Activated naive CD4-positive, alpha-beta T cell treated with anti-CD3 and anti-CD28 coated beads for 36 hours (primary cell): ENCODE measurements at regions of chr2 and their contacts with region 1.

Region 1: GRCh38 chr2:174688079-174688478 is 76.2 kb downstream of the CHRNA1 start:
- DNase-seq: no peak
- H3K4me3 Mint-ChIP-seq: no peak overlapping the region
- H3K27ac Mint-ChIP-seq: no peak overlapping the region
- H3K4me1 Mint-ChIP-seq: peaks cover 22% of the 10 kb centered on the region
- H3K27me3 Mint-ChIP-seq: no peaks in the 10 kb centered on the region

Region 2: DNA sequence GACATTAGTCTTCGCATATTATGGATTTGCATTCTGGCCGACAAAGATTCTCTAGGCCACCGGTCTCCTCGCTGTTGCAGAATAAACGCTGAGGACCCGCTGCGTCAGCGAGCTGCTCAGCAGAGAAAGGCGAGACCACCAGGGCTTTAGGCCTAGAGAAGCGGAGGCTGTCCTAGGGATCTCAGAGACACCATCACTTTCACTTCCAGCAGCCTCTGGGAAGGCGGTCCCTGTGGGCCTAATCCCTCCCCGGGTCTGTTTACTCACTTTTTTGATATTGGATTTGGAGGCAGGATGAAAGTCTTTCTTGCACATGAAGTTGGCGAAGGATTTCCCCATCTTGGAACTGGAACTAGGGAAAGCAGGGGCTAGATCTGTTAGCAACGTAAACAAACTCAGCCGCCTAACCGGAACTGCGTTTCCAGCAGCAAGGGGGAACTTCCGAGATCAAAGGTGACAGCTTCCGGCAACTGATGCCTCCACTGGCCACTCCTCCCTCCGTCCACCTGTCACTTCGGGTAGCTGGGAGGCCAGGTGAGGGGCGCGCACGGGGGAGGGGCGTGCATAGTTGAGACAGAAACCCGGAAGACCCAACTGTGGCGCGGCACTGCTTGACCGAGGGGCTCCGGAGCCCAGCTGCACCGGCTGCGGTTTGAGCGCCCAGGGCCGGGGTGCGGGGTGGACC is 292.7 kb before region 1 on chr2 and contains the start of gene SCRN3:
- CTCF ChIA-PET with region 1: no interaction called
- intact Hi-C with region 1: loop called (anchors 5 kb)
- DNase-seq: peak; percentile 88
- H3K4me3 Mint-ChIP-seq: peak within 1 kb of the TSS; percentile 99
- H3K27ac Mint-ChIP-seq: peak within 1 kb of the TSS; percentile 99
- H3K4me1 Mint-ChIP-seq: peaks cover 38% of the 10 kb centered on the region
- H3K27me3 Mint-ChIP-seq: no peaks in the 10 kb centered on the region
- total RNA-seq, gene SCRN3: 10.7 to 12.3 TPM

Region 3: GRCh38 chr2:174522553-174522952 is 165.5 kb before region 1 on chr2:
- CTCF ChIA-PET with region 1: no interaction called
- intact Hi-C with region 1: loop called (anchors 2 kb)
- DNase-seq: no peak
- H3K4me3 Mint-ChIP-seq: no peak overlapping the region
- H3K27ac Mint-ChIP-seq: no peak overlapping the region
- H3K4me1 Mint-ChIP-seq: peaks cover 14% of the 10 kb centered on the region
- H3K27me3 Mint-ChIP-seq: no peaks in the 10 kb centered on the region

Region 4: DNA sequence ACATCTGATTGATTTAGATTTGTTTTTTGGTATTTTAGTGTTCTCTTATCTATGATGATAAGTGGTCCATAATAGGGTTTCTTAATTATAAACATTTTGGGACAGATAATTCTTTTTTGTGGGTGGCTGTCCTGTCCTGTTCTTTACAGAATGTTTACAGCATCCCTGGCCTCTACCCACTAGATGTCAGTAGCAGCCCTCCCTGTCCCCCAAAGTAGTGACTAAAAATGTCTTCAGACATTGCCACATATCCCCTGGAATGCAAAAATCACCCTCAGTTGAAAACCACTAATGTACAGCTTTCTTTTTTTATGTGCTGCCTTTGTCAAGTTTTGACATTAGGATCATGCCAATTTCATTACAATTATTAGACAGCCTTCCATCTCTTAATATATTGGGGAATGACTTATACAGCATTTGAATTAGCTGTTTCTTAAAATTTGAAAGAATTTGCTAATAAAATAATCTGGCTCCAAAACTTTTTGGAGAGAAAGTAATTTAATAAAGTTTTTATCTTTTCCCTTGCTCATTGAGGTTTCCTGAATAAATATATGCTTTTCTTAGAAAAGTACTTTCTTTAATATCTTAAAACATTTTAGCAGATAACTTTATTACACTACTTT is 110.0 kb before region 1 on chr2:
- CTCF ChIA-PET with region 1: interaction called, 114 read pairs
- intact Hi-C with region 1: loop called (anchors 1 kb)
- DNase-seq: peak; percentile 77
- H3K4me3 Mint-ChIP-seq: no peak overlapping the region
- H3K27ac Mint-ChIP-seq: peak overlapping the region; percentile 30
- H3K4me1 Mint-ChIP-seq: peaks cover 69% of the 10 kb centered on the region
- H3K27me3 Mint-ChIP-seq: no peaks in the 10 kb centered on the region

Region 5: DNA sequence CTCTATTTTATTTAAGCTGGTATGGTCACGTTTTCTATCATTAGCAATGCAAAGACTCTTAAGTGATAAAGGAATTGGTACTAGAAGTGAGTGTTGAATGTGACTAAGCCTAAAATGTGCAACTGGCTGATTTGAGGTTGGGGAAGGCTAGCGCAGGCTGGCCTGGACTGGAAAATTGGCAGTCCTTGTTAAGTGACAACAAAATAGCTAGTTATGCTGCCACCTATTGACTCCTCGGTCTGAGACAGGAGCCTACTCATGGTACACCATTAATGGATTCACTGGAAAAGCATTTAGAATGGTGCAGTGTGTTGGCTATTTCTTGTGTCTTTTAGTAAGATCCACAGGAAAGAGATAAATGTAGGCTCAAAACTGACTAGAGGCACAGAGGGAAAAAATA is 84.8 kb before region 1 on chr2:
- CTCF ChIA-PET with region 1: interaction called, 87 read pairs
- intact Hi-C with region 1: loop called (anchors 1 kb)
- DNase-seq: peak; percentile 85
- H3K4me3 Mint-ChIP-seq: no peak overlapping the region
- H3K27ac Mint-ChIP-seq: peak overlapping the region; percentile 76
- H3K4me1 Mint-ChIP-seq: peaks cover 81% of the 10 kb centered on the region
- H3K27me3 Mint-ChIP-seq: no peaks in the 10 kb centered on the region

Region 6: DNA sequence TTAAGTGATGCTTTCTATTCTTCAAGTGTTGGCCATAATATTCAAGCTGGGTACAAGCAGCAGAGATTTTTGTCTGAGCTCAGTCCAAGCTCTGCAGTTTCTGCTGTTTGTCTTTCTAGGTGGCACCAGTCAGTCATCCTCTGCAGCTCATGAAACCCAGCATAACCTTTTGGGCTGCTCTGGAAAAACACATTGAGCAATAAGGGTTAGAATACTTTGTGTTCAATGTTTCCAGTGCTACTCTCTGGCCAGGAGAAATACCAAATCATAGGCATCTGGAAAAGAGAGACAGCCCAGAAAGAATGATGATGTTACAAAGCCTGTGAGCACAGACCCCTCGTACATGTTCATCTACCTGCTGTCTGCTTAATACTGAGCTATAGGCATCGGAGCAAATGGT is 71.0 kb before region 1 on chr2:
- CTCF ChIA-PET with region 1: interaction called, 14 read pairs
- intact Hi-C with region 1: no loop called
- DNase-seq: no peak
- H3K4me3 Mint-ChIP-seq: no peak overlapping the region
- H3K27ac Mint-ChIP-seq: peak overlapping the region; percentile 86
- H3K4me1 Mint-ChIP-seq: peaks cover 78% of the 10 kb centered on the region
- H3K27me3 Mint-ChIP-seq: no peaks in the 10 kb centered on the region

Region 7: GRCh38 chr2:174654419-174654941 is 33.6 kb before region 1 on chr2:
- CTCF ChIA-PET with region 1: interaction called, 12 read pairs
- intact Hi-C with region 1: no loop called
- DNase-seq: no peak
- H3K4me3 Mint-ChIP-seq: no peak overlapping the region
- H3K27ac Mint-ChIP-seq: no peak overlapping the region
- H3K4me1 Mint-ChIP-seq: peaks cover 43% of the 10 kb centered on the region
- H3K27me3 Mint-ChIP-seq: no peaks in the 10 kb centered on the region